PC-9 (cell line): ENCODE measurements at regions of chr9 and their contacts with region 1.

Region 1: GRCh38 chr9:78296893-78297671 is at the start of gene PSAT1:
- DNase-seq: peak; percentile 94 to 96
- H3K4me3 ChIP-seq: peak within 1 kb of the TSS; percentile 63
- H3K27ac ChIP-seq: peak within 1 kb of the TSS; percentile 97
- H3K4me1 ChIP-seq: peaks cover 22% of the 10 kb centered on the region
- H3K27me3 ChIP-seq: no peaks in the 10 kb centered on the region
- CTCF ChIP-seq: no peak
- total RNA-seq, gene PSAT1: 238 and 315 TPM in 2 replicates

Region 2: DNA sequence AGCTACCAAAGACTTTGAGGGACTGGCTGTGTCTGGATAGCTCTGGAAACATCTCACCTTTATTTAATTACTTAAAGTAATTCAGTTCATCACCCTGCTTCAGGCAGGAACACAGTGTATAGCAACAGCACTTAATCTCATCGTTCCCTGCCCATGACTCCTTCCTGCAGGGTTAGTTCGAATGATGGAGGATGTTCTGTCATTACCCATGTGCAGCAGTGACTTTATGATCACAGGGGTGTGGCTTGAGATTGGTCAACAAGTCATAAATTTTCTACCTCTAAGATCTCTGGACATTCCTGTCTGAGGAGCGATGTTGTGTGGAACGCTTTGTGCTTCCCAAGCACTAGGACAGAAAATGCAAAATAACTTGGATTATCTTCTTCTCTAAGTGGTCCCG is 1354.0 kb before region 1 on chr9:
- CTCF ChIA-PET with region 1: no interaction called
- POLR2A ChIA-PET with region 1: interaction called, 11 read pairs
- intact Hi-C with region 1: no loop called
- DNase-seq: no peak
- H3K4me3 ChIP-seq: no peak overlapping the region
- H3K27ac ChIP-seq: no peak overlapping the region
- H3K4me1 ChIP-seq: no peaks in the 10 kb centered on the region
- H3K27me3 ChIP-seq: peaks cover 39% of the 10 kb centered on the region
- CTCF ChIP-seq: no peak

Region 3: DNA sequence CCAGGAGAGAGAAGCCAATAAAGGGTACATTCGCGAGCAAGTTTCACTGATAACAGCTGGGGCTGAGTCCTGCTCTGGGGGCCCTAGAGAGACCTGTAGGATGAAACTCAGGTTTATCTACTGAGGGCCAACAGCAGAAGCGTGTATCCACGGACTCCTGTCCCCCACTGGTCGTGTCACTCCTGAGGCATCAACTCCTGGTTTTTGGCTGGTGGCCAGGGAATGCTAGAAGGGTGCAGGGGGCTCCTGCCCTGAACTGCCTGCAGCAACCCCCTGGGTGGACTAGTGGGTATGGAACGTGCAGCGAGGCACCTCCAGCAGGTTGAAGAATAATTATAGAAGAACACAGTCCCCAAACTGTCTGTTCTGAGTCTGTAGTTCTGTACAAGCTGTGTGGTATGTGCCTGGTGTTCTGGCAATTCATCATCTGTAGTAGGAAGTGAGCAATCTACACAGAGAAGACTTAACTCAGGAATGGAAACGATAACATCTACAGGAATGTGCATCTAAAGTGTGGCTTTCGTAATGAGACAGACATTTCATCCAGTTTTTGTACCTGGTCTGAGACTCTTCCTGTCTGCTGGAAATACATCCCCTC is 584.5 kb before region 1 on chr9:
- CTCF ChIA-PET with region 1: no interaction called
- POLR2A ChIA-PET with region 1: interaction called, 3 read pairs
- intact Hi-C with region 1: loop called (anchors 5 kb)
- DNase-seq: peak; percentile 45 to 76
- H3K4me3 ChIP-seq: no peak overlapping the region
- H3K27ac ChIP-seq: no peak overlapping the region
- H3K4me1 ChIP-seq: peaks cover 43% of the 10 kb centered on the region
- H3K27me3 ChIP-seq: no peaks in the 10 kb centered on the region
- CTCF ChIP-seq: no peak

Region 4: DNA sequence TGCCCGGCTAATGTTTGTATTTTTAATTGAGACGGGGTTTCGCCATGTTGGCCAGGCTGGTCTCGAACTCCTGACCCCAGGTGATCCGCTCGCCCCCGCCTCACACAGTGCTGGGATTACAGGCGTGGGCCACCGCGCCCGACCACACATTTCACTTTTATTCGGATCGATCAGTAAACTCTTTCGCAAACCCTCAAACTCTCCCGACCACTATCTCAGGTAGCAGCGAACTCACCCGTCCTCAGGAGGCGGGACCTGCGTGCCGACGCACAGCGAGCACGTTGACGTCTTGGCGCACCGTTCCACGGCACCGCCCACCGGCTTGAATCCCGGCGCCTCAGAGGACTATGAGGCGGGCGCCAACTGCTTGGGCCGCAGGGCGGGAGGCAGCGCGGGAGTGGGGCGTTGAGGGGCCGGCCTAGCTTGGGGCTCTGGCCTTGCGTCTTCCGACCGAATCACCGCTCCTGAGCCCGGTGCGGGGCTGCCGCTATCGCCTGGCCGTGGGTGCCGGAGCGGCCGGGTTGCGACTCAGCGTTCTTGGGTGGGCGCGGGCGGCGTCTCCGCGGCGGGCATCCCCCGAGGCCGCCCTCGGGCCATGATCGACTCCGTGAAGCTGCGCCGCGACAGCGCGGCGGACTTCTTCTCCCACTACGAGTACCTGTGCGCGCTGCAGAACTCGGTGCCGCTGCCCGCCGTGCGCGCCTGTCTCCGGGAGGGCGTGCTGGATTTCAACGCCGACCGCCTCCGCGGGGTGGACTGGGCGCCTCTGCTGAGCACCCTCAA is 61.1 kb before region 1 on chr9 and contains the start of gene CEP78:
- CTCF ChIA-PET with region 1: interaction called, 13 read pairs
- POLR2A ChIA-PET with region 1: interaction called, 14 read pairs
- intact Hi-C with region 1: loop called (anchors 2 kb)
- DNase-seq: peak; percentile 90 to 94
- H3K4me3 ChIP-seq: peak within 1 kb of the TSS; percentile 94
- H3K27ac ChIP-seq: peak within 1 kb of the TSS; percentile 56
- H3K4me1 ChIP-seq: peaks cover 7% of the 10 kb centered on the region
- H3K27me3 ChIP-seq: no peaks in the 10 kb centered on the region
- CTCF ChIP-seq: no peak
- total RNA-seq, gene CEP78: 37.8 and 38.3 TPM in 2 replicates

Region 5: GRCh38 chr9:78261403-78262001 is 35.6 kb before region 1 on chr9:
- CTCF ChIA-PET with region 1: interaction called, 4 read pairs
- POLR2A ChIA-PET with region 1: no interaction called
- intact Hi-C with region 1: loop called (anchors 5 kb)
- DNase-seq: no peak
- H3K4me3 ChIP-seq: no peak overlapping the region
- H3K27ac ChIP-seq: no peak overlapping the region
- H3K4me1 ChIP-seq: no peaks in the 10 kb centered on the region
- H3K27me3 ChIP-seq: no peaks in the 10 kb centered on the region
- CTCF ChIP-seq: peak; percentile 82

Region 6: GRCh38 chr9:78490231-78490630 is 193.1 kb after region 1 on chr9:
- CTCF ChIA-PET with region 1: no interaction called
- POLR2A ChIA-PET with region 1: no interaction called
- intact Hi-C with region 1: no loop called
- DNase-seq: no peak
- H3K4me3 ChIP-seq: no peak overlapping the region
- H3K27ac ChIP-seq: no peak overlapping the region
- H3K4me1 ChIP-seq: no peaks in the 10 kb centered on the region
- H3K27me3 ChIP-seq: peaks cover 7% of the 10 kb centered on the region; the same call in 1 of the 2 replicates
- CTCF ChIP-seq: no peak